Stomach (tissue), 19 donors: ENCODE measurements at regions of chr14 and their contacts with region 1.

Region 1: DNA sequence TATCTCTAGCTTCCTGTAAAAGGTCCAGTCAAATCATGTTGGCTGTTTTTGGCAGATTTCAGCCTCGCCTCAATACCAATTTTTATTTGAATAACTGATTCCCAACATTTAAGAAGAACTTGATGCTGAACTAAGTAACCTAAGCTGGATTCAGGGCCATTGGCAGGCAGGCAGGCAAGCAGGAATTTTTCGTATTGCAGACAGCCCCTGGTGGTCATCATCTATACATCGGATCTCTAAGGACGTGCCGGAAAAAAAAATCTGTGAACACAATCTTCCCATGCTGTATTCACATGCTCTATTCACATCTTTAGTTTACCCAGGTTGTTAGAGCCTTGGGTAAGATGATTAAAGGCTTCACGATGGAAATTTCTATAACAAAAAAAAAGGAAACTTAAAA is 7.0 kb downstream of the VCPKMT start:
- DNase-seq: peak in 1 of 2 donors; percentile 36
- H3K4me3 ChIP-seq: no peak overlapping the region
- H3K27ac ChIP-seq: peak overlapping the region in 1 of 5 donors; percentile 80
- H3K4me1 ChIP-seq: peaks cover 0 to 45% (median 21%) of the 10 kb centered on the region in 4 donors
- H3K27me3 ChIP-seq: no peaks in the 10 kb centered on the region
- CTCF ChIP-seq: no peak
- EP300 ChIP-seq: no peak
- POLR2A ChIP-seq: no peak

Region 2: DNA sequence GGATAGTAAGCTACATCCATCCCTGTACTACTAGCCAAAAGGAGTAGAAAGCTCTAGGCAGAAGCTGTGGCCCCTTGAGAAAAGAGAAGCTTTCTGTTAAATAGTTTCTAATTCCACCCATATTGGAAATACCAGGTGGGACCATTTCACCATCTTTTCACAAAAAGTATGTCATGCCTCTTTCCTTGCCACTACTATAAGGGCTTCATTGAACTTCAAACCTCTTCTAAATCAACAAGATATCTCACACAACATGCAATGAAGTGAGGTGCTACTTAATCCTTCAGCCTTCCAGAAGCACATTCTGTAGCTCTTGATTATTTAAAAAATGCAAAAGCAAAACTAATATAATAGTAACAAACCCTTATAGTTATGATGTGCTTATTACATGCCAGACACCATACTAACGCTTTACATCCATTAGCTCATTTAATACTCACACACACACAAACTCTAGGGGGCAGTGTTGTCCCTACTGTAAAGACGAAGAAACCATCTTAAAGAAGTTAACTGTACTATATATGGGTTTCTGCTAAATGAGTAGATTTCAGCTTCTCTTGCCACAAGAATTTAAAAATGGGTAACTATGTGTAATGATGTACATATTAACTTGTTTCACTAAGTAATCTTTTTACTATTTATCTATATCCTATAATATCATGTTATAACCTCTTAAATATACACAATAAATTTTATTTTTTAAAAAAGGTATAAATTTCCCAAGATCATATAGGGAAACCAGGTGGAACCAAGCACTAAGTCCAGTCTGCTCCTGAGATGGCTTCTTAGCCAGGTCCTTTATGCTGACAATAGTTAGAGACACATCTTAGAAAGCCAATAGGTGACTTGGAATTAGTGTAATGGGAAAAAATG is 647.6 kb before region 1 on chr14:
- intact Hi-C with region 1: no loop called
- DNase-seq: peak; percentile 70 to 87
- H3K4me3 ChIP-seq: no peak overlapping the region
- H3K27ac ChIP-seq: no peak overlapping the region
- H3K4me1 ChIP-seq: no peaks in the 10 kb centered on the region
- H3K27me3 ChIP-seq: no peaks in the 10 kb centered on the region
- CTCF ChIP-seq: peak in 5 of 7 experiments; percentile 46 to 75 (median 72)
- EP300 ChIP-seq: no peak
- POLR2A ChIP-seq: no peak

Region 3: GRCh38 chr14:49767562-49768300 is 341.6 kb before region 1 on chr14 and contains the start of gene KLHDC2:
- intact Hi-C with region 1: no loop called
- DNase-seq: peak; percentile 93 to 97
- H3K4me3 ChIP-seq: peak within 1 kb of the TSS; percentile 80 to 99 (median 92)
- H3K27ac ChIP-seq: peak within 1 kb of the TSS; percentile 96 to 99 (median 97)
- H3K4me1 ChIP-seq: peaks cover 34 to 46% (median 40%) of the 10 kb centered on the region in 4 donors
- H3K27me3 ChIP-seq: no peaks in the 10 kb centered on the region
- CTCF ChIP-seq: peak in 2 of 7 experiments; percentile 4 to 34
- EP300 ChIP-seq: no peak
- POLR2A ChIP-seq: no peak
- total RNA-seq, gene KLHDC2: 55.4 to 258 (median 137) TPM

Region 4: DNA sequence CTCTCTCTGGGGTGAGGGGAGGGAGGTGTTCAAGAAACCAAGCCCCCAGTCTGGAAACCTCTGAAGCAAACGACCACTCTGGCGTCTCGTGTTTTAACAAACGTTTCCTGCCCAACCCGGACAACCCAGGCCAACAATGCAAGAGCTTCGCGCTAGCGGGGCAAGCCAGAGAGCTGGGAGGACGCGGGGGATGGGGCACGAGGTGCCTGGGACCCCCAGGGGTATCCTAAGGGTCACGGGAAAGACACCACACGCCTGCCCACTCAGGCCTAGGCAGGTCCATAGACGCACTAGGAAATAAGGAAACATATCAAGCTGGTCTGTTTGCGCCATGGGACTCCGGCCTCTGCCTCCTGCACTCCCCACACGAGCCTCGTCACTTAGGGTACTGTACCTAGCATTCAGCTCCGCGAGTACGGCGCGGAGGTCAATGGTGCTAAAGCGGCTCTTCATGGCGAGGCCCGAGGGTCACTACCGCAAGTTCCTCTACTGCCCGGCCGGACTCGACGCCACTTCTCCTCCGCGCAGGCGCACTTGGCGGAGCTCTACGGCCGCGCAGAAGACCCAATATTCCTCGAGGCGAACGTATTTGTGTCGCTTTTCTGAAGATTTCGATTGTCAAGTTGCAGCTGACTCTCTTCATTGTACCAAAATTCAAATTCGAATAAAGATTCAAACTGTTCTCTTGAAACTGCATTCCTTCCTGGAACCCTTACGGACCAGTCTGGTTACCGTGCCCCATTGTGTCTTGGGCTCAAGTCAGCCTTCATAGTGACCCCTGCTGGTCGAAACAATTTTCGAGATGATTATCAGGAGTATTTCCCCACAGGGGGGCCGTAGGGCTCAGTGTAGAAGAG is 256.8 kb before region 1 on chr14 and contains the start of gene NEMF:
- intact Hi-C with region 1: loop called (anchors 10 kb)
- DNase-seq: peak; percentile 89 to 96
- H3K4me3 ChIP-seq: peak within 1 kb of the TSS; percentile 58 to 83 (median 70)
- H3K27ac ChIP-seq: peak within 1 kb of the TSS; percentile 90 to 93 (median 91)
- H3K4me1 ChIP-seq: peaks cover 11 to 45% (median 35%) of the 10 kb centered on the region in 4 donors
- H3K27me3 ChIP-seq: no peaks in the 10 kb centered on the region
- CTCF ChIP-seq: peak in 5 of 7 experiments; percentile 28 to 85 (median 72)
- EP300 ChIP-seq: no peak
- POLR2A ChIP-seq: peak in 2 of 4 donors; percentile 41 to 64
- total RNA-seq, gene NEMF: 35.7 to 478 (median 107) TPM

Region 5: GRCh38 chr14:49879683-49880204 is 229.6 kb before region 1 on chr14:
- intact Hi-C with region 1: loop called (anchors 10 kb)
- DNase-seq: peak; percentile 51 to 81
- H3K4me3 ChIP-seq: no peak overlapping the region
- H3K27ac ChIP-seq: peak overlapping the region in 1 of 5 donors; percentile 55
- H3K4me1 ChIP-seq: peaks cover 0 to 11% (median 0%) of the 10 kb centered on the region in 4 donors
- H3K27me3 ChIP-seq: no peaks in the 10 kb centered on the region
- CTCF ChIP-seq: peak in 4 of 7 experiments; percentile 26 to 61 (median 49)
- EP300 ChIP-seq: no peak
- POLR2A ChIP-seq: no peak

Region 6: GRCh38 chr14:50260511-50260910 is 151.2 kb after region 1 on chr14:
- intact Hi-C with region 1: no loop called
- DNase-seq: peak in 1 of 2 donors; percentile 40
- H3K4me3 ChIP-seq: no peak overlapping the region
- H3K27ac ChIP-seq: no peak overlapping the region
- H3K4me1 ChIP-seq: no peaks in the 10 kb centered on the region
- H3K27me3 ChIP-seq: no peaks in the 10 kb centered on the region
- CTCF ChIP-seq: peak in 3 of 7 experiments; percentile 19 to 35 (median 32)
- EP300 ChIP-seq: no peak
- POLR2A ChIP-seq: no peak